ENCODE measurements at regions of chr5 and their contacts with region 1.

Region 1: DNA sequence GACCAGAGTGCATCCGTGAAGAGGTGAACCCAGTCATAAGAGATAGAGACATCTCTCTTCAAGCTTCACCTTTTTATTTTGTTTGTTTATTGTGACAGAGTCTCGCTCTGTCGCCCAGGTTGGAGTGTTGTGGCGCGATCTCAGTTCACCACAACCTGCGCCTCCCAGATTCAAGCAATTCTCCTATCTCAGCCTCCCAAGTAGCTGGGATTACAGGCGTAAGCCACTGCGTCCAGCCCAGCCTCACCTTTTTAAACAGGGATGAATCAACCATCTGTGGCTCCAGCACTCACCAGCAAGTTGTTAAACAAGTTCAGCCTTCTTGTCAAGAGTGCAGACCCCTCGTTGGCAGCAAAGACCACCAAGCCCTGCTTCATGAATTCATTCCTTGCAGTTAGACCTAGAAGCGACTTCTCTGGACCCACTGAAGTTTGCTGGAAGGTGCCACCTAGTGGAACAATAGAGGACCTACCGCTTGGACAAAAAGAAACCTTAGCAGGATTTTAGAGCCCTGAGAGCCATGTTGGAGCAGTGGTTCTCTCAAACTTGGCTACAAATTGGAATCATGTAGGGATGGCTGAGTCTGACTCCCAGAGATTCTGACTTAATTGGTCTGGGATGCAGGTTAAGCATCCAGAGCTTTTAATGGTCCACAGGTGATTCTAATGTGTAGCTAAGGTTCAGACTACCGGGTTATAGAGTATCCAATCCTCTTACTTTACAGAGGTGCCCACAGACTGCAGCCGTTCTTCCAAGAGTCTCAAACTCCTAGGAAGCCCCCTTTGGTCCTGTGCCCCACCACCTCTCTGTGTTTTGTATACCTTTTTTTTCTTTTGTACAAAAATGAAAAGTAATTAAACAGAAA is 10.5 kb upstream of the GALNT10 start:
- DNase-seq: no peak

Region 2: DNA sequence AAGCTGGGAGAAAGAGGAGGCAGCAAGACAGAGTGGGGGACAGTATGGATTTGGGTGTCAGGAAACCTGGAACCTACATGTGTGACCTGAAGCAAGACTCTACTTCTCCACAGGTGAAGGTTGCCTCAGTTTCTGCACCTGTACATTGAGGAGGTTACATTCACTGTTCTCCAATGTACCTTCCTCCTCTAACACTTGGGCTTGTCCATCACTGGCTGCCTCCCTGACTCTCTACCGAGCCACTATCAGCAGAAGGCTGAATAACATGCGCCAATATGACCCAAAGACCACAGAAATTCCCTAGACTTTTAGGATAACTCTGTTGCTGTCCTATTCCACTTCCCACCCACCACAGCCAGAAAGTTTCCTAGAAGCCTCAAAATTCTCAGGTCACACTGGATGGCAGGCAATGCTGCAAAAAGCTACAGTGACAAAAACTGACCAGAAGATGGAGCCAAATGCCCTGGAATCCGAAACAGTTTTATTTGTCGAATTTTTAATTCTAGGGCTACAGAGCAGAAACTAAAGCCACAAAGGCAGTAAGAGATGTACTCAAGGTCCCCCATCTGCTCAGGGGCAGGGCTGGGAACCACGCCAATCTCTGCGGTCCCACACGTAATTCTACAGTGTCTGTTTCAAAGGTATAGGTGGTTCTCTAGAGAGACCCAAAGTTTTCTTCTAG is 205.8 kb before region 1 on chr5:
- intact Hi-C with region 1: loop called (anchors 2 kb)
- DNase-seq: no peak

Region 3: GRCh38 chr5:154072414-154073171 is 107.5 kb before region 1 on chr5:
- intact Hi-C with region 1: loop called (anchors 2 kb)
- DNase-seq: peak; percentile 90

Region 4: DNA sequence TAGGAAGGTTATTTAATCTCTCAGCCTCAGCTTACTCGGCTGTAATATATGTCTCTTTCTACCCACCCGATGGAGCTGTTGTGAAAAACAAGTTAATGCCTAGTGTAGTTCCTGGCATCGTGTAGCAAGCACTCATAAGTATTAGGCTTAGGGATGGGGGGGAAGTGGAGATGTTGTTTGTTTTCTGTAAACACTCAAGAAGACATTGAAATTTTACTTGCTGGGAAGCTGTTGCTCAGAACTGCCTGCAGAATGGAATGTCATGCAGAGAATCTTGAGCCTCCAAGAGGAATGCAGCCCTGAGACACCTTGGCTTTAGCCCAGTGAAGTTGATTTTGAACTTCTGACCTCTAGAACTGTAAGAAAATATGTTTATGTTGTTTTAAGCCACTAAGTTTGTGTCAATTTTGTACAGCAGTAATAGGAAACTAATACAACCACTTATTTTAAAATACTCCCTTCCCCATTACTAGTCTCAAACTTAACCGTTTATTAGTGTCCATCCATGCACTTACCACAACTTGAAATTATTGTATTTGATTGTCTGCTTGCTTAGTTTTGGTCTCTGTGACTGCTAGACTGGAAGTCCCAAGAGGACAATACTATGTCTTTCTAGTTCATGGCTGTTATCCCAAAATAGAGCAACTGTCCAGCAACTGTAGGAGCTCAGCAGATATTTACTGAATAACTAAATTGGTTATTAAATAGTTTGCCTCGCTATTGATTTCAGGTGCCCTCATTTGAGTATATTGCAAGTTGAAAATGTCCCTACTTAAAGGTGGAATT is 87.5 kb before region 1 on chr5:
- intact Hi-C with region 1: no loop called
- DNase-seq: no peak

Measured in cardiac septum (tissue), 1 donor.